ENCODE measurements at regions of chr12 and their contacts with region 1.

Region 1: GRCh38 chr12:109804820-109805761 is 28.1 kb downstream of the TRPV4 start:
- DNase-seq: peak; percentile 51 to 92 (median 66)
- ATAC-seq: peak; percentile 95
- H3K4me3 ChIP-seq: no peak overlapping the region
- H3K27ac ChIP-seq: no peak overlapping the region
- H3K4me1 ChIP-seq: peaks cover 0 to 6% of the 10 kb centered on the region in 2 donors
- H3K27me3 ChIP-seq: no peaks in the 10 kb centered on the region
- CTCF ChIP-seq: peak; percentile 93 to 99

Region 2: GRCh38 chr12:109880016-109880931 is 75.2 kb after region 1 on chr12 and contains the start of gene GLTP:
- intact Hi-C with region 1: loop called in 1 of 2 experiments (anchors 10 kb)
- DNase-seq: peak; percentile 84 to 97 (median 88)
- ATAC-seq: peak; percentile 98
- H3K4me3 ChIP-seq: peak within 1 kb of the TSS; percentile 53 to 71
- H3K27ac ChIP-seq: peak within 1 kb of the TSS; percentile 41 to 82
- H3K4me1 ChIP-seq: peaks cover 7 to 48% of the 10 kb centered on the region in 2 donors
- H3K27me3 ChIP-seq: no peaks in the 10 kb centered on the region
- CTCF ChIP-seq: peak; percentile 38 to 67
- polyA plus RNA-seq, gene GLTP: 30.1 to 33.3 (median 31.2) TPM